Endothelial cell of umbilical vein (primary cell): ENCODE measurements at regions of chr12 and their contacts with region 1.

Region 1: DNA sequence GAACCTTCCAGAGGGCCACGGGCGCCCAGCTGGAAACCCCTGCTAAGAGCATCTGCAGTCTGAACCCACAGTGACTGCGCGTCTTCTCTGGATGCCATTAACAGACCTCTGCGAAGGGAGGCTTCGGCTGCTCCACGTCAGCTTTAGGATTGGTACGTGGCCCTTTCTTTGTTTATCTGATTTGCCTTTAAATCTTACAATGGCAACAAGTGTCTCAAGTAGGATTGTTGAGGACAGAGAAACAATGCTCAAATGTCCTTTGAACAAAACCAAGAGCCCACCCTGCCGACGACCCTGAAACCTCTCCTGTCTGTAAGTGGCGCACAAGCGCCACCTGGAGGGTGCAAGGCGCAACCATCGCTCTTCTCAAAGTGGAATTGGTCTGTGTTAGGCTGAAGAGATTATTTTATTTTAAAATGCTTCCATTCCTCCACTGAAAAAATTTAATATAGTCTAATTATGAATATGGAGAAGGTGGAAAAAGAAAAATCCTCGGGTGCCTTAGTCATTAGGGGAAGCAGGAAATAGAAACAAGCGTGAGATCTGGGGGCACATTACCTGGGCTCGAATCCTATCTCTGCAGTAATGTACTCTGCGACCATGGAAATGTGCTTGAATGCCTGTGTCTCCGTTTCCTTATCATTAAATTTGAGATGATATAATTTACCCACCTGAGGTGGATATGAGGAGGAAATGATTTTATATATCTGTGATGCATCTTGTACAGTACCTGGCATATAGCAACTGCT is 82.6 kb upstream of the PTPRB start:
- DNase-seq: peak; percentile 83
- H3K4me3 ChIP-seq: peak overlapping the region in 2 of 3 experiments; percentile 22 to 48
- H3K27ac ChIP-seq: peak overlapping the region; percentile 34
- H3K4me1 ChIP-seq: peaks cover 30% of the 10 kb centered on the region
- H3K27me3 ChIP-seq: no peaks in the 10 kb centered on the region
- CTCF ChIP-seq: peak; percentile 86 to 96
- POLR2A ChIP-seq: no peak

Region 2: DNA sequence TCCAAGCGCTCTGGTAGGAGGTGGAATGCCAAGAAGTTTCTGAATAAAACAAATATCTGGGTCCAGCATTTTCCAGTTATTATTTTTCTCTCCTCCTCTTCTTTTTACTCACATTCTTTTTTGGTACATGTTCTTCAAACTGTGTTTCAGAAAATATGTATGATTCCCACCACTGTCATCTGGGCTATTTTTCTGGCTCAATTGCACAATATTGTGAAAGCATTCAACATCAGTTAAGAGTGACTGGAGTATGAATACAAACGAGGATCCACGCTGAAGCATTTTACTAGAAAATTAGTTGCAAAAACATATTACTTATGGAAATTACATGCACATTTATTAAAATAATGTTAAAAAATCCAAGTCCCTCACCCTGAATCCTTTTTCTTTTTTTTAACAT is 292.2 kb before region 1 on chr12:
- CTCF ChIA-PET with region 1: no interaction called
- POLR2A ChIA-PET with region 1: no interaction called
- dilution Hi-C with region 1: no loop called
- intact Hi-C with region 1: no loop called
- DNase-seq: no peak
- H3K4me3 ChIP-seq: no peak overlapping the region
- H3K27ac ChIP-seq: no peak overlapping the region
- H3K4me1 ChIP-seq: no peaks in the 10 kb centered on the region
- H3K27me3 ChIP-seq: no peaks in the 10 kb centered on the region
- CTCF ChIP-seq: no peak
- POLR2A ChIP-seq: no peak

Region 3: GRCh38 chr12:70443062-70443673 is 276.7 kb before region 1 on chr12:
- CTCF ChIA-PET with region 1: no interaction called
- POLR2A ChIA-PET with region 1: no interaction called
- dilution Hi-C with region 1: no loop called
- intact Hi-C with region 1: loop called (anchors 10 kb)
- DNase-seq: peak; percentile 8
- H3K4me3 ChIP-seq: no peak overlapping the region
- H3K27ac ChIP-seq: no peak overlapping the region
- H3K4me1 ChIP-seq: peaks cover 5% of the 10 kb centered on the region
- H3K27me3 ChIP-seq: no peaks in the 10 kb centered on the region
- CTCF ChIP-seq: no peak
- POLR2A ChIP-seq: no peak

Region 4: GRCh38 chr12:70590051-70590450 is 129.8 kb before region 1 on chr12:
- CTCF ChIA-PET with region 1: interaction called, 119 read pairs
- POLR2A ChIA-PET with region 1: no interaction called
- dilution Hi-C with region 1: no loop called
- intact Hi-C with region 1: loop called (anchors 1 kb)
- DNase-seq: peak; percentile 80
- H3K4me3 ChIP-seq: no peak overlapping the region
- H3K27ac ChIP-seq: no peak overlapping the region
- H3K4me1 ChIP-seq: no peaks in the 10 kb centered on the region
- H3K27me3 ChIP-seq: no peaks in the 10 kb centered on the region
- CTCF ChIP-seq: peak; percentile 82 to 88
- POLR2A ChIP-seq: no peak

Region 5: DNA sequence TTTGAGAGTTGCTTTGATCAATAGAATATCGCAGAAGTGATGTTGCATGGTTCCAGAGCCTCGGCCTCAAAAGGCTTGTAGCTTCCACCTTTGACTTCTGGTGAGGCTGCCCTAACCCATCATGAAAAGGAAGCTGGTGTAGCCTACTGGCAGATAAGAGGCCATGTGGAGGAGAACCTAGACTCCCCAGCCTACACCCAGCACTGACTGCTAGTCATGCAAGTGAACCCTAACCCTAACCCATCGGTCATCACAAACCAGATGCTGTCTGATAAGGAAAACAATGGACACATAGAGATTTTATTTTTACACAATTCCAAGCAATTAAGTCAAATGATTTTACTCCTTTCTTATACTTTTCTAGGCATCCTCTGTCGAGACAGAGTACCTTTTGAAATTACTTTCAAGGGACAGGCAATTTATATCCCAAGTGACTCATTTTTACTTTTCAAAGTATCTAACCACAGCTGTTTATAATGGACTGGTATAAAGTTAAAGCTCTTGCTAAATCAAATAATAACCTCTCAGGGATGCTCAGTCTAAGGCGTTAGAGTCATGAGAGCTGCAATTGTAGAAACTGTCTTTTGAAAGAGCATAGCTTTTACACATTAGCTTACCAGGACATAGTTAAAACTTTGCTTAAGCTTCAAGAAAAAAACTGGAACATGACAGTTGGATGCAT is 100.2 kb before region 1 on chr12:
- CTCF ChIA-PET with region 1: interaction called, 12 read pairs
- POLR2A ChIA-PET with region 1: no interaction called
- dilution Hi-C with region 1: loop called (anchors 25 kb)
- intact Hi-C with region 1: no loop called
- DNase-seq: no peak
- H3K4me3 ChIP-seq: no peak overlapping the region
- H3K27ac ChIP-seq: no peak overlapping the region
- H3K4me1 ChIP-seq: peaks cover 21% of the 10 kb centered on the region
- H3K27me3 ChIP-seq: no peaks in the 10 kb centered on the region
- CTCF ChIP-seq: no peak
- POLR2A ChIP-seq: no peak

Region 6: GRCh38 chr12:70671698-70672097 is 48.1 kb before region 1 on chr12:
- CTCF ChIA-PET with region 1: interaction called, 3 read pairs
- POLR2A ChIA-PET with region 1: no interaction called
- dilution Hi-C with region 1: no loop called
- intact Hi-C with region 1: loop called (anchors 2 kb)
- DNase-seq: no peak
- H3K4me3 ChIP-seq: no peak overlapping the region
- H3K27ac ChIP-seq: peak overlapping the region; percentile 39
- H3K4me1 ChIP-seq: peaks cover 12% of the 10 kb centered on the region
- H3K27me3 ChIP-seq: no peaks in the 10 kb centered on the region
- CTCF ChIP-seq: no peak
- POLR2A ChIP-seq: no peak

Region 7: GRCh38 chr12:70733385-70733784 is 13.5 kb after region 1 on chr12:
- CTCF ChIA-PET with region 1: interaction called, 15 read pairs
- POLR2A ChIA-PET with region 1: no interaction called
- dilution Hi-C with region 1: no loop called
- intact Hi-C with region 1: no loop called
- DNase-seq: peak; percentile 71
- H3K4me3 ChIP-seq: no peak overlapping the region
- H3K27ac ChIP-seq: no peak overlapping the region
- H3K4me1 ChIP-seq: no peaks in the 10 kb centered on the region
- H3K27me3 ChIP-seq: peaks cover 0 to 7% of the 10 kb centered on the region in 2 experiments
- CTCF ChIP-seq: peak; percentile 51 to 63
- POLR2A ChIP-seq: no peak

Region 8: DNA sequence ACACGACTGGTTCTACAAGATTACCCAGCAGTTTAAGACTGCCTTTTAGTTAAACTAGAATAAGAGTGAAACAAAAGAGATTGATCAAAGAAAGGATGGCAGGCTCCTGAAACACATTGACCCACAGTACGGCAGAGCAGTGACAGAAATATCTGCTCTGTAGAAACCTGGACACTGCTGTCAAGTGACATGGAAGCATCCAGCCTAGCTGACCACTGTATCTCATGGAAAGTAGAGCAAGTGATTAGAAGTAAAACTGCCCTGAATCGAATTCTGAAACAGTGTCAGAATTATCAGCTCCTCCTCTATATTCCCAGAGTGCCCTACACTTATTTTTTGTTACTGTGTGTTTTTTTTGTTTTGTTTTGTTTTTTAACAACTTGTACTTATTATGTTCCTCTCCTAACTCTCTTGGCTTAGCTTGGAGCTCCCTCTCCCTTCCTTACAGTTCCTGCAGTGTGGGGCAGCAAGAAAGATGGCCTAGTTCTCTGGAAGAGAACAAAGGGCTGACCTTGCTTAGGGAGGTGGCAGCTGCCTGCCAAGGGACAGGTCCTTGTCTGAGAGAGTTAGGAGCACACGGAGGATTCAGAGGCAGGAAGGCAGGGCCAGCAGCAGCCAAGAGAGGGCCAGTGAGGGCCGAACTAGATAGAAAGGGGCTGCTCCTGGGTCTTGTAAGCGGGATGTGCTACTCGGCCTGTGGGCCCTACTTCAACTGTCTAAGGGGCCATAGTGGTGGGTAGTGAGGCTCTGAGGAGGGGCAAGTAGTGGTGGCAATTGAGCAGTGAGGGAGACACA is 103.5 kb after region 1 on chr12:
- CTCF ChIA-PET with region 1: no interaction called
- POLR2A ChIA-PET with region 1: no interaction called
- dilution Hi-C with region 1: no loop called
- intact Hi-C with region 1: no loop called
- DNase-seq: no peak
- H3K4me3 ChIP-seq: no peak overlapping the region
- H3K27ac ChIP-seq: no peak overlapping the region
- H3K4me1 ChIP-seq: no peaks in the 10 kb centered on the region
- H3K27me3 ChIP-seq: no peaks in the 10 kb centered on the region
- CTCF ChIP-seq: no peak
- POLR2A ChIP-seq: no peak